ENCODE measurements at regions of chr2 and their contacts with region 1.

Region 1: DNA sequence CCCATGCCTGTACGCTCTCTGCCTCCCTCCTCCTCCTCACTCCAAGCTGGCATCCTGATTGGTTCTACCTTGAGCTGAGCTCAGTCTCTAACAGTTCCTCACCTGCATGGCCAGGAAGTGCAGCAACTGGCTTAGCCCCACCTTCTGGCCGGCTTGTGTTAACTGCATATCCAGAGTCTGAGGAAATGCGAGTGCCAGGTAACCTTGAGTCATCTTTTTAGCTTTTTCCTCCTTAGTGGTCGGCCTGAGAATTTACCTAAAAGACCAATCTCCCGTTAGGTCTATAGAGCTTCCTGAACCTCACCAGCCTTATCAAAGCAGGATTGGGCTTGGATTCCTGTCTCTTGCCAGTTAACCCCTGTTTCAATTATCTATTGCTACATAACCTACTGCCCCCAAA is 89.5 kb upstream of the STK39 start:
- DNase-seq: peak; percentile 16
- H3K4me3 Mint-ChIP-seq: no peak overlapping the region
- H3K27ac Mint-ChIP-seq: no peak overlapping the region
- H3K4me1 Mint-ChIP-seq: peaks cover 6% of the 10 kb centered on the region
- H3K27me3 Mint-ChIP-seq: peaks cover 15% of the 10 kb centered on the region

Region 2: GRCh38 chr2:168136392-168136977 is 200.4 kb before region 1 on chr2:
- intact Hi-C with region 1: loop called (anchors 1 kb)
- DNase-seq: no peak
- H3K4me3 Mint-ChIP-seq: no peak overlapping the region
- H3K27ac Mint-ChIP-seq: no peak overlapping the region
- H3K4me1 Mint-ChIP-seq: peaks cover 9% of the 10 kb centered on the region
- H3K27me3 Mint-ChIP-seq: no peaks in the 10 kb centered on the region

Region 3: DNA sequence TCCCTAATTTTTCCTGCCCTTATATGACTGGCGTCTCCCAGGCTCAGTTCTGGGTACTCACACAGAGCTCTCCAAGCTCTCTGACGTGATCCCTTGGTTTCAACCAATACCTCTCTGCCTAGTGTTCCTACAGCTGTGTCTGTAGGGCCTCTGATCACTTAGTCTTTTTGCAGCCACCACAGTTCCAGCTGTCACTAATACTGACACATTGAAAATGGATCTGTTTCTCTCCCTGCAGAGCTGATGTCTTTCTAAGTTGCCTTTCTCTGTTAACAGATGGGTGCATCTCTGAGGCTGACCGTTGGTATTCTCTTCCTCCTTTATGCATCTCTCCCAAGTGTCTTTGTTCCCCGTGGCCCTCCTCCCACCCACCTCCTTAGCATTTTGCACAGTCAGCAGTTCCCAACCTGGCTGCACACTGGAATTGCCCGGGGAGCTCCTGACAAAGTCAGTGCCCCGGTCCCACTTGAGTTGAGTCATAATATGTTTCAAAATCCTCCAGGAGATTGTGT is 181.7 kb after region 1 on chr2:
- intact Hi-C with region 1: no loop called
- DNase-seq: no peak
- H3K4me3 Mint-ChIP-seq: no peak overlapping the region
- H3K27ac Mint-ChIP-seq: no peak overlapping the region
- H3K4me1 Mint-ChIP-seq: peaks cover 26% of the 10 kb centered on the region
- H3K27me3 Mint-ChIP-seq: no peaks in the 10 kb centered on the region

Measured in activated T-helper 2 cell treated with anti-CD3 and anti-CD28 coated beads, Interferon-gamma antibody, Interleukin-2, Interleukin-4, amounts not matched to agents 10 μg/mL and 5 μg/mL and 100 μg/mL, durations not matched to agents 14 hours and 24 hours and 36 hours (primary cell).